Natural killer cell (primary cell): ENCODE measurements at regions of chr10 and their contacts with region 1.

Region 1: GRCh38 chr10:22573820-22574569 is 140.4 kb downstream of the PIP4K2A start:
- DNase-seq: peak; percentile 42 to 75
- ATAC-seq: peak; percentile 71 to 87 (median 81)
- H3K4me3 ChIP-seq: no peak overlapping the region
- H3K4me3 Mint-ChIP-seq: peak overlapping the region; percentile 82
- H3K27ac ChIP-seq: peak overlapping the region; percentile 71
- H3K27ac Mint-ChIP-seq: peak overlapping the region; percentile 62 to 79
- H3K4me1 ChIP-seq: peaks cover 34% of the 10 kb centered on the region
- H3K4me1 Mint-ChIP-seq: peaks cover 63 to 72% of the 10 kb centered on the region in 2 donors
- H3K27me3 ChIP-seq: no peaks in the 10 kb centered on the region
- H3K27me3 Mint-ChIP-seq: no peaks in the 10 kb centered on the region
- CTCF ChIP-seq: peak; percentile 71

Region 2: GRCh38 chr10:22003079-22003913 is 570.7 kb before region 1 on chr10 and contains the start of gene DNAJC1:
- intact Hi-C with region 1: loop called (anchors 10 kb)
- DNase-seq: peak; percentile 96 to 98
- ATAC-seq: peak; percentile 84 to 96 (median 89)
- H3K4me3 ChIP-seq: peak within 1 kb of the TSS; percentile 96
- H3K4me3 Mint-ChIP-seq: peak within 1 kb of the TSS; percentile 91
- H3K27ac ChIP-seq: peak within 1 kb of the TSS; percentile 97
- H3K27ac Mint-ChIP-seq: peak within 1 kb of the TSS; percentile 85 to 88
- H3K4me1 ChIP-seq: peaks cover 4% of the 10 kb centered on the region
- H3K4me1 Mint-ChIP-seq: peaks cover 38 to 45% of the 10 kb centered on the region in 2 donors
- H3K27me3 ChIP-seq: no peaks in the 10 kb centered on the region
- H3K27me3 Mint-ChIP-seq: peaks cover 0 to 5% of the 10 kb centered on the region in 2 donors
- CTCF ChIP-seq: peak; percentile 9
- total RNA-seq, gene DNAJC1: 38.4 to 63.7 (median 50.6) TPM

Region 3: DNA sequence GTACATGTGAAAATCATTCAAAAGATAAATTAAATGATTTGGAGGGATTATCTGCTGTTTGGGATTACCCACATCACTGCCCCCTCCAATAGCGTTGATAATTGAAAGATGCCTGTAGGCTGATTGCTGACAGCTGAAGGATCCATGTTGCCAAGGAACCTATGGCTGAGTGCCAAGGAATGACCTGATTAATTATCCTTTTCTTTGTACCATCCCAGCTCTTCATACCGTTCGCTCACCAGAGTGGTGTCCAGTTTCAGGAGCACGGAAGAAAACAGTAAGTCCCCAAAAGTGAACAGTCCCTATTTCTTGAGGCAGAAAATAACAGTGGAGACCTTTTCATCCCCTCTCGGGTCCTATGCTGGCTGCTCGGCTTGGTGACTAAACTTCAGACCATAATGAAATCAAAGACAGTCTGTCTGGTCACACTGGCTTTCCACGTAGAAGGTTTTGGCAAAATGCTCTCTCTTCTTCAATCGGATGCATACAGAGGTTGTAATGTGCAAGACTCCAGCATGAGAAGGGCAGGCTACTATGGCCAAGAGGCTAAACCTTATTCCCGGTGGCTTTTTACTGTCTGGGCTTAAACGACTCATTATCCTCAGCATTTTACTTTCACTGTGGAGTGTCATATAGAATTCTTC is 119.9 kb before region 1 on chr10:
- intact Hi-C with region 1: no loop called
- DNase-seq: no peak
- ATAC-seq: no peak
- H3K4me3 ChIP-seq: no peak overlapping the region
- H3K4me3 Mint-ChIP-seq: no peak overlapping the region
- H3K27ac ChIP-seq: no peak overlapping the region
- H3K27ac Mint-ChIP-seq: no peak overlapping the region
- H3K4me1 ChIP-seq: no peaks in the 10 kb centered on the region
- H3K4me1 Mint-ChIP-seq: peaks cover 0 to 8% of the 10 kb centered on the region in 2 donors
- H3K27me3 ChIP-seq: no peaks in the 10 kb centered on the region
- H3K27me3 Mint-ChIP-seq: peaks cover 0 to 9% of the 10 kb centered on the region in 2 donors
- CTCF ChIP-seq: no peak

Region 4: GRCh38 chr10:22505911-22506685 is 67.9 kb before region 1 on chr10:
- intact Hi-C with region 1: loop called (anchors 2 kb)
- DNase-seq: peak; percentile 72 to 81
- ATAC-seq: peak; percentile 93 to 99 (median 99)
- H3K4me3 ChIP-seq: no peak overlapping the region
- H3K4me3 Mint-ChIP-seq: peak overlapping the region; percentile 85
- H3K27ac ChIP-seq: peak overlapping the region; percentile 54
- H3K27ac Mint-ChIP-seq: peak overlapping the region; percentile 86 to 89
- H3K4me1 ChIP-seq: peaks cover 32% of the 10 kb centered on the region
- H3K4me1 Mint-ChIP-seq: peaks cover 63 to 67% of the 10 kb centered on the region in 2 donors
- H3K27me3 ChIP-seq: no peaks in the 10 kb centered on the region
- H3K27me3 Mint-ChIP-seq: peaks cover 0 to 7% of the 10 kb centered on the region in 2 donors
- CTCF ChIP-seq: no peak

Region 5: DNA sequence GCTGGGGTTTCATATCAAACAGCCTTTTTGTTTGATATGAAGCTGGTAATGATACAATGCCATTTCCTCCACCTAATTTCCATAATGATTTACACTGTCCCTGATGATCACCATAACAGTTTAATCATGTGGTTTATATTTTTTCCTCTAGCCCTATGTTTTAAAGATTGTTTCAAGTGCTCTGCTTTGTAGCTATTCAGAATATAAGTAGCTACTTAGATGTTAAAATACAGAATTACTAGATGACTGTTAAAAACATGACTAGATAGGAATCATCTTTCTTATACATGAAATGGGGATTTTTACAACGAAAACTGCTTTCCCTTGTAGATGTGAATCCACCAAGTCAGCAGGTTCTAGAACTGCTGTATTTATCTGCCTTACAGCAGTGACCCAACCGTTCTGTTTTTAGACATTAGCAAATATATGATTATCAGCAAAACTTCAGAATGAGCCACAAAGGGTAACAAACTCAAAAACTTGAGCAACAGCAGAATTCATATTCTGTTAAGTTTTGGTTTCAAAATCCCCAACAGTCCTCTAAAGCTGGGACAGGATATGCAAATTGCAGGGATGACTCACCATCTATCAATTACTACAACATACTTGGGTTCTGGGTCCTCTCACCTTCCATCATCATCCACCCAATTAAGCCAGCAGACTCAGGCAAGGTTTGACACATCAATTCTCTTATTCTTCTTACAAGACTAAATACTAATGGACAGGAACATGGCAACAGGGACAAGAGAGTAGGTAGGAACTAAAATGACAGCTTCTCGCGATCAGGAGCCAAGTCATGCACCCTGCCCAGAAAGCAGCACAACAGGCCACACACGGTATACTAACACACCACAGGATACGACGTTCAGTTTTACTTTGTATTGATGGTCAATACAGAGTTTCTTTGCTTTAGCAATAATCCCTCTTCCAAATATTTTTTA is 56.5 kb after region 1 on chr10:
- intact Hi-C with region 1: loop called (anchors 5 kb)
- DNase-seq: peak in 1 of 2 donors; percentile 87
- ATAC-seq: peak; percentile 67 to 81 (median 73)
- H3K4me3 ChIP-seq: peak overlapping the region; percentile 25
- H3K4me3 Mint-ChIP-seq: peak overlapping the region; percentile 90
- H3K27ac ChIP-seq: peak overlapping the region; percentile 97
- H3K27ac Mint-ChIP-seq: peak overlapping the region; percentile 99
- H3K4me1 ChIP-seq: peaks cover 64% of the 10 kb centered on the region
- H3K4me1 Mint-ChIP-seq: peaks cover 94 to 96% of the 10 kb centered on the region in 2 donors
- H3K27me3 ChIP-seq: no peaks in the 10 kb centered on the region
- H3K27me3 Mint-ChIP-seq: no peaks in the 10 kb centered on the region
- CTCF ChIP-seq: no peak

Region 6: DNA sequence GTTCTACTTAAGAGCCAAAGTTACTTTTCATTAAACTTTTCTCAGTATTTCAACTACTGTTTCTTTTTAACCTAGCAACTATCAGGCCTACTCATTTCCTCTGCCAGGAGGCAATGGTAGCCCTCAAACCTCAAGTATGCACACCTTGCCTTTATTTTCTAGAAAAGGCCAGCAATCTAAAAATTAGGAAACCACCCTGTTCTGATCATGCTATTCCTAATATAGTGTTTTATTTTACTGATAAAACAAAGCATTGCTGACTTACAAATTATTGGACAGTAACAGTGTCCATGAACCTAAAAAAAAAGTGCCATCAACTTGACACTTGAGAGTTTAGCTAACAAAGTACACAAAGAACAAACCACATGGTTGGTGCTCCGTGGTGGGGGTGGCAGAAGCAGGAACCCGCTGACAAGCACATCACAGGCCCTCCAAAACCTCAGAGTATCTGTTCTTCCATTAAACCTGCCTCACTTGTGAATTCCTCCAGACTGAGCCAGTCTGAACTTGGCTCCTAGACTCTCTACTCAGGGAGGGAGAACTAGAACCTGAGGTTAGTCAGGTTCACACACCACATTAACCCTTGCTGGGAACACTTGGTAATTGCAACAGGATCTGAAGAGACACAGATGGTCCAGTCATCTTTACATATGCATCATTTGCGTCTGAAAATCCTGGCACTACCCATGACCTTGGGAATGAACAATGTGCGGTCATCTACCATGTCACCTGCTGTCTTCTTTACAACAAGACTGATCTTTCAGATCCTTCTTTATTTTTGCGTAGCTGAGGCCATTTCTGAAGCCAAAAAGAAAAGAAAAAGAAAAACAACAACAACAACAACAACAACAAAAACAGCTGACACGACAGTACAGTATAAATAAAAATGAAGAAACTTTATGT is 108.5 kb after region 1 on chr10:
- intact Hi-C with region 1: loop called (anchors 1 kb)
- DNase-seq: peak; percentile 62 to 84
- ATAC-seq: peak; percentile 46 to 76 (median 71)
- H3K4me3 ChIP-seq: no peak overlapping the region
- H3K4me3 Mint-ChIP-seq: peak overlapping the region; percentile 85
- H3K27ac ChIP-seq: peak overlapping the region; percentile 94
- H3K27ac Mint-ChIP-seq: peak overlapping the region; percentile 92 to 99
- H3K4me1 ChIP-seq: peaks cover 63% of the 10 kb centered on the region
- H3K4me1 Mint-ChIP-seq: peaks cover 86 to 90% of the 10 kb centered on the region in 2 donors
- H3K27me3 ChIP-seq: no peaks in the 10 kb centered on the region
- H3K27me3 Mint-ChIP-seq: no peaks in the 10 kb centered on the region
- CTCF ChIP-seq: no peak

Region 7: DNA sequence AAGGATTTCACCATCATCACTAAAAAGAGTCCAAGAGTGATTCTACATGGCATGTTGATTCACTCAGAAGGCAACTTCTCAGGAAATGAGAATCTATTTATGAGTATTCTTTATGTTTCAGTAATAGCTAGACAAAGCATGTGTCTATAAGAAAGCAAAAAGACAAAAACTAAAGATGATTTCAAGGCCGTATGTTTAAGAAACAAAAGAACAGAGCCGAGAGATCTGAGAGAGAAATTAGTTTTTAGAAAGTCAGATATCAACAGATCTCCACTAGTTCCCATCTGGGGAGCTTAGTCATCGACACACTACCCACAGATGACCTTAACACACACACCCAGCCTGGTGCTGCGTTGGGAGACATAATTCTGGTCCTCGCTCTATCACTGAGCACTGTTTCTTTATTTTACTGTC is 119.4 kb after region 1 on chr10:
- intact Hi-C with region 1: no loop called
- DNase-seq: peak in 1 of 2 donors; percentile 48
- ATAC-seq: peak; percentile 89 to 93 (median 90)
- H3K4me3 ChIP-seq: no peak overlapping the region
- H3K4me3 Mint-ChIP-seq: peak overlapping the region; percentile 84
- H3K27ac ChIP-seq: peak overlapping the region; percentile 62
- H3K27ac Mint-ChIP-seq: peak overlapping the region; percentile 79 to 99
- H3K4me1 ChIP-seq: peaks cover 48% of the 10 kb centered on the region
- H3K4me1 Mint-ChIP-seq: peaks cover 76 to 84% of the 10 kb centered on the region in 2 donors
- H3K27me3 ChIP-seq: no peaks in the 10 kb centered on the region
- H3K27me3 Mint-ChIP-seq: no peaks in the 10 kb centered on the region
- CTCF ChIP-seq: no peak

Region 8: DNA sequence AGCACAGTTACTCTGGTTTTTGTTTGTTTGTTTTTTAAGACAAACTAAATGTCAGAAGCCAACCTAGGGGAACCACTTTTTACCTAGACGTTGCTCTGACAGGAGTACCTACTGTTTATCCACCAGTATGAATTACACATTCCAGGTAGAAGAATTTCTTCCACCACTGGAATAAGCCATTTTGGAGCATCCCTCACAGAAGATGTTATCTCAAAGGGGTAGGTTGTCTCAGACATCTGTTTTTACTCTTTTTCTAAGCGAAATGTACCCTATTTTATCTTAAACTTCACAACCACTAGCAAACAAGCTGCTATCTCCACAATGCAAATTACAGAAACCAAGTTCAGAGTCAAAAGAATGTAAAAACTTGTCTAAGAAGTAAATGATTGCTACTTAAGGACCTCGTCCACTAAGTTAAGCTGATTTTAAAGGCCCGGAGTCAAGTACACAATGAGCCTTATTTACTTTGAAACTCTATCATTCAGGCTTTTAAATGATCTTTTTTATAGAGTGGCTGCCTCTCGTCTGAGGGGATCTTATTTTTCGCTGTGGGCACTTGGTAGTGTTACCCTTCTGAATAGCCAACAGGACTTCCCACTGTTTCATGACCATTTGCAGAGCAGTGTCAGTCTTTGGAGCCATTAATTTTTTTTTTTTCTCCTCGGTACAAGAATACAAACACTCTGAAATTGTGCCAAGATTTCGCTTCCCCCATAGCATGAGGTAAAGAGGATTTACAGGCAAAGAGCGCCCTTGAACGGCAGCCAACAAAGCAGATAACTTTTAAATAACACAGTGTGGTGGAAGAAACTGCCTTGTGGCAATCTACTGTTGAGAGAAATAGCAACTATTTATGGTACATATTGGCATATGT is 338.1 kb after region 1 on chr10:
- intact Hi-C with region 1: loop called (anchors 2 kb)
- DNase-seq: no peak
- ATAC-seq: peak in 2 of 3 donors; percentile 9 to 27
- H3K4me3 ChIP-seq: no peak overlapping the region
- H3K4me3 Mint-ChIP-seq: peak overlapping the region; percentile 62
- H3K27ac ChIP-seq: peak overlapping the region; percentile 88
- H3K27ac Mint-ChIP-seq: peak overlapping the region; percentile 85 to 92
- H3K4me1 ChIP-seq: peaks cover 8% of the 10 kb centered on the region
- H3K4me1 Mint-ChIP-seq: peaks cover 26 to 34% of the 10 kb centered on the region in 2 donors
- H3K27me3 ChIP-seq: no peaks in the 10 kb centered on the region
- H3K27me3 Mint-ChIP-seq: no peaks in the 10 kb centered on the region
- CTCF ChIP-seq: no peak